ENCODE measurements at regions of chr18 and their contacts with region 1.

Region 1: DNA sequence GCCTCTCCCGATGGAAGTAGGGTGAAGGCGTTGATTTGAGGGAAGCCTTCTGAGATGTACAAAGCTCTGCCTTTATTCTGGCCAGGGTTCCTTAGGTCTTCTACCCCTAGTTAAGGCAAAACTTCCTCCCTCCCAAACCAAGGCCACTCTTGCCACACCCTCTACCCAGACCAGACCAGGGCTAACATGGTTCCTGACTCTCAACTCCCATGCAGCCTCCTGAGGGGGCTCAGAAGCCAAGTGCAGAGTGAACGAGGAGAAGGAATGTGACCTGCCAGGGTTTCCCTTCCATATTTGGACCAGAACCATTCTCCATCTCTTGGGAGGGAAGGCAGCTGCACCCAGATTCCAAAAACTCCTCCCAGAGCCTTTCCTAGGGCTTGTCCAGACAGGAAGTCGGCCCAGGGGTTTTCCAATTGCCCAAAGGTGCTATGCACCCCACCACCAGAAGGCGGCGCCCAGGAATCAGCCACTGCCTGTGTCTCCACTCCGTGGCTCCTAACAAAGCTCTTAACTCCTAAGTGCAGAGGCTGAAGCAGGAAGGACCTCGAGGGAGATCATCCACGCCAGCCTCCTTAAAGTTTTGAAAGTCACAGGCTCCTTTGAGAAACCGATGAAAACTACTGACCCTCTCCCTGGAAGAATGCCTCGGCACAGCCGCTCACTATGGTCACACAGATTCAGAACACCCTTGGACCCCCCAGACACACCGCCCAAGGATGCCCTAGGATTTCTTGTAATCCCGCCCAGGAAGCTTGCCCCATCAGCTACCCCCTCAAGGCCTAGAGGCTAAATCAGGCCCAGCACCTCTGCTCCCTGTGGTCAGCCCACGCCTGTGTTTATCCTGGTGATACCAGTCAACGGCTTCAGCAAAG is 157.8 kb downstream of the SMAD2 start:
- DNase-seq: peak; percentile 50
- H3K4me3 Mint-ChIP-seq: no peak overlapping the region
- H3K27ac Mint-ChIP-seq: peak overlapping the region; percentile 11
- H3K4me1 Mint-ChIP-seq: peaks cover 12% of the 10 kb centered on the region
- H3K27me3 Mint-ChIP-seq: peaks cover 10% of the 10 kb centered on the region

Region 2: DNA sequence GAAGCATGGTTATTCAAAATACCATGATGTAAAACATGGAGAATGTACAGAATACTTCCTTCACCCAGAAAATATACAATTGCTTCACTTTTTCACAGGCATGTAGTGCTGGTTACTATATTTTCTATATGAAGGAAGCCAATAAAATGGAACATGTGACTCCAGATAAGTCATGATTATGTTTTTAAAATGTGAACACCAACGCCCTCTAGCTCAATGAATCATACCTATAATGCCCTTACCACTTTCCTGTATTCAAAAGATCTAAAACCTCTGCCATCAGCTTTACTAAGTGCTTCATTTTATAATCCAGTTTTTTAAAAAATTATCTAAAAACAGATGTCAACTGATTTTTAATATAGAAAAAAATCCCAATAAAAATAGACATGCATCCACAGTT is 98.0 kb after region 1 on chr18:
- intact Hi-C with region 1: loop called (anchors 5 kb)
- DNase-seq: no peak
- H3K4me3 Mint-ChIP-seq: no peak overlapping the region
- H3K27ac Mint-ChIP-seq: peak overlapping the region; percentile 4
- H3K4me1 Mint-ChIP-seq: peaks cover 34% of the 10 kb centered on the region
- H3K27me3 Mint-ChIP-seq: no peaks in the 10 kb centered on the region

Region 3: DNA sequence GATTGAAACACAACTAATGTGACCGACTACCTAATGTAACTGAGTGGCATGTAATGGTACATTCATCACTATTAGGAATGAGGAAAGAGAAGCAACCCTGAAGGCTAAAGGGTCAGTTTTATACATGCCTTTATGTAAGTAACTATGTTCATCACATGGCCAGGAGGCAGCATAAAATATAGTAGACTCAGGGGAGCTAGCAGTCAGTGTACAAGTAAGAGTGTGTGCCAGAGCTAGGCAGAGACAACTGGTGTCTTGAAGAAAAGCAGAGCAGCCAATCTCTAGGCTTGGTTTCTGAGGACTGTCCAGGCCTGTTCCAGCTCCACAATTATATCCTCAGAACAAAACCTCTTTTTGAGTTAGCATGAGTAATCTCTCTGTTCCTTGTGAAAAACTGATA is 139.7 kb after region 1 on chr18:
- intact Hi-C with region 1: loop called (anchors 5 kb)
- DNase-seq: no peak
- H3K4me3 Mint-ChIP-seq: peak overlapping the region; percentile 73
- H3K27ac Mint-ChIP-seq: peak overlapping the region; percentile 93
- H3K4me1 Mint-ChIP-seq: peaks cover 81% of the 10 kb centered on the region
- H3K27me3 Mint-ChIP-seq: no peaks in the 10 kb centered on the region

Region 4: DNA sequence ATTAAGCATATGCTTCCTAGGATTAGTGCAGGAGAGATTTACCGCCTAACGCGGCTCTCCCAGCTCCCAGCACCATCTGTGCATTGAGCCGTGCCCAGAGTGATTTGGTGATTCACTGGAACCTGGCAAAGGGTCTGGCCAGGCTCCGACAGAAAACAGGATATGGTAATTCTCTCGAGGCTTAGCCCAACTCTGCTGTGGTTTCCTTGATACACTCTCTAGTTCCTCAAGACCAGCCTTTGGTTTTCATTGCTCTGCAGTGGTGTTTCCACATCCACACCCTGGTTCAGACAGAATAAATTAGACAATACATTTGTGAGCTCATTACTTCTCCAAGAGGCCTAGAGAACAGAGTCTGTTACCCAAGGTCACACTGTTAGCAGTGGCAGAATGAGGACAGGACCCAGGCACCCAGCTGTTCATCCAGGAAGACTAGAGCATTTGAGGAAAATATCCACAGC is 180.9 kb after region 1 on chr18:
- intact Hi-C with region 1: no loop called
- DNase-seq: peak; percentile 21
- H3K4me3 Mint-ChIP-seq: peak overlapping the region; percentile 27
- H3K27ac Mint-ChIP-seq: peak overlapping the region; percentile 30
- H3K4me1 Mint-ChIP-seq: peaks cover 8% of the 10 kb centered on the region
- H3K27me3 Mint-ChIP-seq: peaks cover 22% of the 10 kb centered on the region

Region 5: DNA sequence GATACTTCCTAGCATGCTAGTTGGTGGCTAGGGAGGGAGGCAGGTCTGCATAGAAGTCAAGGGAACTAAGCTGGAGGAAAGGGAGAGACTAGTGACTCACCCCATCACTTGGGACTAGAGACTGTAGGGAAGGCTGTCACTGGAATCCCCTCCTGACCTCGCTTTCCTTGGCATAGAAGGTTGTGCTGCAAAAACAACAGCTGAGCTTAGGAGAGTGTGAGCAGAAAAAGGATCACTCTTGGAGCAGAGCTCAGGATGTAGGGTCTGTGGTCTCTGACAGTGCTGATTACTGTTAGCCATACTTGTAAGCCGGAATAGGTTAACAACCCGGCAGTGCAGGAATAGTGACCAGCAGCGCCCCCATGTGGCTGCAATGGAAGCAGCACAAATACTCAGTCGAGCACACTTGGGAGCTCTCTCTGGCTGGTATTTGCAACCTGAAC is 224.7 kb after region 1 on chr18:
- intact Hi-C with region 1: loop called (anchors 1 kb)
- DNase-seq: no peak
- H3K4me3 Mint-ChIP-seq: no peak overlapping the region
- H3K27ac Mint-ChIP-seq: no peak overlapping the region
- H3K4me1 Mint-ChIP-seq: no peaks in the 10 kb centered on the region
- H3K27me3 Mint-ChIP-seq: peaks cover 7% of the 10 kb centered on the region

Region 6: GRCh38 chr18:48022531-48023329 is 250.1 kb after region 1 on chr18:
- intact Hi-C with region 1: loop called (anchors 1 kb)
- DNase-seq: no peak
- H3K4me3 Mint-ChIP-seq: no peak overlapping the region
- H3K27ac Mint-ChIP-seq: no peak overlapping the region
- H3K4me1 Mint-ChIP-seq: peaks cover 12% of the 10 kb centered on the region
- H3K27me3 Mint-ChIP-seq: peaks cover 11% of the 10 kb centered on the region

Region 7: GRCh38 chr18:48326901-48327675 is 554.5 kb after region 1 on chr18:
- intact Hi-C with region 1: loop called (anchors 10 kb)
- DNase-seq: no peak
- H3K4me3 Mint-ChIP-seq: no peak overlapping the region
- H3K27ac Mint-ChIP-seq: no peak overlapping the region
- H3K4me1 Mint-ChIP-seq: peaks cover 6% of the 10 kb centered on the region
- H3K27me3 Mint-ChIP-seq: peaks cover 5% of the 10 kb centered on the region

Region 8: GRCh38 chr18:48445540-48445939 is 672.9 kb after region 1 on chr18:
- intact Hi-C with region 1: loop called (anchors 2 kb)
- DNase-seq: peak; percentile 57
- H3K4me3 Mint-ChIP-seq: no peak overlapping the region
- H3K27ac Mint-ChIP-seq: no peak overlapping the region
- H3K4me1 Mint-ChIP-seq: no peaks in the 10 kb centered on the region
- H3K27me3 Mint-ChIP-seq: peaks cover 34% of the 10 kb centered on the region